PC-3 (cell line): ENCODE measurements at regions of chr21 and their contacts with region 1.

Region 1: DNA sequence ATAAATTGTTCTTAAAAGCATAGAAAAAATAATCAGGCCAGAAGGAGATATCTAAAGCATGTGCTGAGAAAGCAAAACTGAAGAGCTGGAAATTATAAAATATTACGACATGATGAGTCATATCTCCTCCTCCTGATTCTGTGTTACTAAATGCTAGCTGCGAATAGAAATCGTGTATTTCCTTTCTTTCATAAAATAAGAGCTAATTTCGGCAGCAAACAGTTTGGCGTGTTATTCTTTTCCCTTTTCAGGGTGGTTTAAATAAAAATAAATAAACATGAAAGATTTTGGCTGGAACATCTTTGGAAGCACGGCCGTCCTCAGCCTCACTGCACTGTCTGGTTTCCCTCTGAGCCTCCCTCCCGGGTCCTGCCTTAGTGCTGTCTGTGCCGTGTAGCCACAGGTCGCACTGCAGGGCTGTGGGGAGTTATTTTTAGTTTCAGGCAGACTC is 56.0 kb downstream of the ADARB1 start:
- DNase-seq: peak; percentile 86
- ATAC-seq: peak; percentile 58
- H3K4me3 ChIP-seq: peak overlapping the region; percentile 63
- H3K27ac ChIP-seq: peak overlapping the region; percentile 69
- H3K4me1 ChIP-seq: peaks cover 29% of the 10 kb centered on the region
- H3K27me3 ChIP-seq: no peaks in the 10 kb centered on the region
- CTCF ChIP-seq: no peak

Region 2: GRCh38 chr21:44792702-44793591 is 337.4 kb before region 1 on chr21:
- CTCF ChIA-PET with region 1: no interaction called
- POLR2A ChIA-PET with region 1: interaction called, 3 read pairs
- intact Hi-C with region 1: loop called (anchors 10 kb)
- DNase-seq: peak; percentile 83
- ATAC-seq: peak; percentile 97
- H3K4me3 ChIP-seq: no peak overlapping the region
- H3K27ac ChIP-seq: no peak overlapping the region
- H3K4me1 ChIP-seq: peaks cover 10% of the 10 kb centered on the region; the same call in 1 of the 2 replicates
- H3K27me3 ChIP-seq: no peaks in the 10 kb centered on the region
- CTCF ChIP-seq: peak; percentile 90

Region 3: GRCh38 chr21:44939532-44940115 is 190.7 kb before region 1 on chr21 and contains the start of gene SLX9:
- CTCF ChIA-PET with region 1: interaction called, 4 read pairs
- POLR2A ChIA-PET with region 1: interaction called, 4 read pairs
- intact Hi-C with region 1: loop called (anchors 2 kb)
- DNase-seq: peak; percentile 90
- ATAC-seq: peak; percentile 83
- H3K4me3 ChIP-seq: peak within 1 kb of the TSS; percentile 95
- H3K27ac ChIP-seq: peak within 1 kb of the TSS; percentile 61
- H3K4me1 ChIP-seq: peaks cover 30% of the 10 kb centered on the region
- H3K27me3 ChIP-seq: no peaks in the 10 kb centered on the region
- CTCF ChIP-seq: no peak
- total RNA-seq, gene SLX9: 80.1 and 94.9 TPM in 2 replicates

Region 4: DNA sequence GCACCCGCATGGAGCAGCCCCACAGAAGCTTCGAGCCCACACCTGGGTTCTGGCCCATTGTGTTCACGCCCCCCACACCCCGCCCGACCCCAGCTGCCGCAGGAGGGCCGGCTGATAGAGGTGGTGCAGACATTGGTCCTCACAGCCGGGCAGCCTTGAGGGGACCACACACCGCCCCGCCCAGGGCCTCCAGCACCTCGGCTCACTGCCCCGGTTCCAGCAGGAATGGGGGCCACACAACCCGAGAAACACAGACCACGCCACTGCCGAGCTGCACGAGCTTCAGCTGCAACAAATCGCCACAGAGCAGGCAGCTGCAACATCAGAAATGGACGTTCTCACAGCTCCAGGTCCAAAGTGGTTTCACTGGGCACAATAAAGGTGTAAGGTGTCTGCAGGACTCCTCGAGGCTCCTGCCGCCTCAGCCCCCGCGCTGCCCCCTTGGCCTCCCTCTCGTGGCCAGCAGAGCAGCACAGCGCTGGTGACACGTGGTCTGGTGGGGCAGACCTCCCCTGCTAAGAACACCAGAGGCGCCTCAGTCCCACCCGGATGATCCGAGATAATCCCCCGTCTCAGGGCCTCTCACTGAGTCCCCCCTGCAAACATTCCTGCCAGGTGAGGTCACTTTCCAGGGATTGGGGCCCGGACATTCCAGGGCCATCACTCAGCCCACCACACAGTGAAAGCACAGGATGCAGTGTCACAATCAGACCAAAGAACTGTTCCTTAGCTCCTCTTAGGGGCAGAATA is 118.3 kb before region 1 on chr21:
- CTCF ChIA-PET with region 1: interaction called, 14 read pairs
- POLR2A ChIA-PET with region 1: no interaction called
- intact Hi-C with region 1: loop called (anchors 5 kb)
- DNase-seq: peak; percentile 99
- ATAC-seq: peak; percentile 94
- H3K4me3 ChIP-seq: peak overlapping the region; percentile 57
- H3K27ac ChIP-seq: peak overlapping the region; percentile 85
- H3K4me1 ChIP-seq: peaks cover 25% of the 10 kb centered on the region
- H3K27me3 ChIP-seq: no peaks in the 10 kb centered on the region
- CTCF ChIP-seq: no peak

Region 5: GRCh38 chr21:45098867-45099266 is 31.5 kb before region 1 on chr21:
- CTCF ChIA-PET with region 1: interaction called, 53 read pairs
- POLR2A ChIA-PET with region 1: no interaction called
- intact Hi-C with region 1: loop called (anchors 1 kb)
- DNase-seq: peak; percentile 52
- ATAC-seq: peak; percentile 48
- H3K4me3 ChIP-seq: no peak overlapping the region
- H3K27ac ChIP-seq: no peak overlapping the region
- H3K4me1 ChIP-seq: peaks cover 16% of the 10 kb centered on the region
- H3K27me3 ChIP-seq: no peaks in the 10 kb centered on the region
- CTCF ChIP-seq: peak; percentile 80

Region 6: DNA sequence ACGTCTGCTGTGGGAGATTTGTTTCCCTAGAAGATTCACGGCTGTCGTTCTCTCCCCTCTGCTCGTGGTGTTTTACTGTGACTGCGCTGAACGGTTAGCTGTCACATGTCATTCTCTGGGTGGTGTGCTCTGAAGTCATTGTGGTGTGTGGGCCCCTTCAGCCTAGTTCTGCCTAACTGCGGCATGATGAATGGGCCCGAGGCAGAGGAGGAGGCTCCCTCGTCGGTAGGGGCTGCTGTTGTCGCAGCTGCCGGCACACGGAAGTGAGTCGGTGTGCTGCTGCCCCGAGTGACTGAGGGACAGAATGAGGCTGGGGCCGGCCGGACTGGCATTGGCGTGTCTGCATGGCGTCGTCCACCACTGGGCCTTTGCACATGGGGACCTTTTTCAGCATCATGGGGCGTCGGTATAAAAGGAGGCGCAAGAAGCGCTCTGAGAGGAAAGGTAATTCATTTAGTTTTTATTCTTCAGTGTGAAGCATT is 22.0 kb after region 1 on chr21:
- CTCF ChIA-PET with region 1: no interaction called
- POLR2A ChIA-PET with region 1: no interaction called
- intact Hi-C with region 1: no loop called
- DNase-seq: no peak
- ATAC-seq: no peak
- H3K4me3 ChIP-seq: no peak overlapping the region
- H3K27ac ChIP-seq: no peak overlapping the region
- H3K4me1 ChIP-seq: no peaks in the 10 kb centered on the region
- H3K27me3 ChIP-seq: no peaks in the 10 kb centered on the region
- CTCF ChIP-seq: no peak